ENCODE measurements at regions of chr6 and their contacts with region 1.

Region 1: GRCh38 chr6:127539272-127539671 is 20.1 kb upstream of the MTCL3 start:
- DNase-seq: no peak
- H3K4me3 ChIP-seq: no peak overlapping the region
- H3K27me3 ChIP-seq: 0 out of 2 replicates have a peak, but pooled peaks cover 1% of the 10 kb centered on the region
- CTCF ChIP-seq: no peak

Region 2: DNA sequence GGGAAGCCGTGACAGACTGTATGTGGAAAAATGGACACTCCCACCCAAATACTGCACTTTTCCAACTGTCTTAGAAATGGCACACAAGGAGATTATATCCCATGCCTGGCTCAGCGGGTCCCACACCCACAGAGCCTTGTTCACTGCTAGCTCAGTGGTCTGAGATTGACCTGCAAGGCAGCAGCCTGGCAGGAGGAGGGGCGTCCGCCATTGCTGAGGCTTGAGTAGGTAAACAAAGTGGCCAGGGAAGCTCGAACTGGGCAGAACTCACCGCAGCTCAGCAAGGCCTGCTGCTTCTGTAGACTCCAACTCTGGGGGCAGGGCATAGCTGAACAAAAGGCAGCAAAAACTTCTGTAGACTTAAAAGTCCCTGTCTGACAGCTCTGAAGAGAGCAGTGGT is 284.0 kb before region 1 on chr6:
- CTCF ChIA-PET with region 1: no interaction called
- POLR2A ChIA-PET with region 1: no interaction called
- DNase-seq: no peak
- H3K4me3 ChIP-seq: no peak overlapping the region
- H3K27me3 ChIP-seq: no peaks in the 10 kb centered on the region
- CTCF ChIP-seq: no peak

Region 3: DNA sequence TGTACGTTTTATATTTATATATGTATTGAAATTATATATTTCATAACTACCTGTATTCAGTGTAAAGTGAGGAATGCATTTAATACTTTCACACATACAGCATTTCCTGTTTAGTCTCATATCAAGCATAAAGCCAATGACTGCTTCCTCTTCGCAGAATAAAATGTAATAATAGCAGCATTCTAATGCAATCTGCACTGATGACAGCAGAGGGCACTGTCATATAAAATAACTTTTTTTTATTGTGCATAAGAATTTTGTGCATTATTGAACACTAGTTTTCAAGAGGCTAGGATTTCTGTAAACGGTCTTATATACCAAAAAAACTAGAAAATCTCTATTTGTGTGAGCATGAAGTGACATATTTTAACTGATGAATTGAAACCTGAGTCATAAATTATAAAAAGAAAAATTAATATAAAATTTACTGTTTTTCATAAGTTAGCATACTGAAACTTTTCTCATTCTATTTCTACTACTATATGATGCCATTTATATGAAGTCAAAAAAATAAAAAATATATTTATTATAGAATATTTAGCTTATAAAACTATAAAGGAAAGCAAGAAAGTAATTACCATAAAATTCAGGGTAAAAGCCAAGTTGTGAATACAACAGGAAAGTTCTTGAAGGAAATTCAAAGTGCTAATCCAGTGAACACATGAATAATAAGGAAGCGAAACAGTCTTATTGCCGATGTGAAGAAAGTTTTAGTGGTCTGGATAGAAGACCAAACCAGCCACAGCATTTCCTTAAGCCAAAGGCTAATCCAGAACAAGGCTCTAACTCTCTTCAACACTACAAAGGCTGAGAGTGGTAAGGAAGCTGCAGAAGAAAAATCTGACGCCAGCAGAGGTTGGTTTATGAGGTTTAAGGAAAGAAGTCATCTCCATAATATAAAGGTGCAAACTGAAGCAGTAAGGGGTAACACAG is 236.3 kb before region 1 on chr6:
- CTCF ChIA-PET with region 1: interaction called, 21 read pairs
- POLR2A ChIA-PET with region 1: no interaction called
- DNase-seq: no peak
- H3K4me3 ChIP-seq: no peak overlapping the region
- H3K27me3 ChIP-seq: no peaks in the 10 kb centered on the region
- CTCF ChIP-seq: peak; percentile 62

Region 4: GRCh38 chr6:127464881-127465459 is 74.3 kb before region 1 on chr6:
- CTCF ChIA-PET with region 1: interaction called, 56 read pairs
- POLR2A ChIA-PET with region 1: no interaction called
- DNase-seq: no peak
- H3K4me3 ChIP-seq: no peak overlapping the region
- H3K27me3 ChIP-seq: no peaks in the 10 kb centered on the region
- CTCF ChIP-seq: peak; percentile 91

Measured in BJ (cell line).